Posterior vena cava (tissue), 2 donors: ENCODE measurements at regions of chr3 and their contacts with region 1.

Region 1: GRCh38 chr3:41912280-41912679 is 49.6 kb downstream of the ULK4 start:
- DNase-seq: no peak

Region 2: GRCh38 chr3:41622769-41623168 is 289.5 kb before region 1 on chr3:
- intact Hi-C with region 1: loop called in 1 of 2 experiments (anchors 5 kb)
- DNase-seq: no peak

Region 3: DNA sequence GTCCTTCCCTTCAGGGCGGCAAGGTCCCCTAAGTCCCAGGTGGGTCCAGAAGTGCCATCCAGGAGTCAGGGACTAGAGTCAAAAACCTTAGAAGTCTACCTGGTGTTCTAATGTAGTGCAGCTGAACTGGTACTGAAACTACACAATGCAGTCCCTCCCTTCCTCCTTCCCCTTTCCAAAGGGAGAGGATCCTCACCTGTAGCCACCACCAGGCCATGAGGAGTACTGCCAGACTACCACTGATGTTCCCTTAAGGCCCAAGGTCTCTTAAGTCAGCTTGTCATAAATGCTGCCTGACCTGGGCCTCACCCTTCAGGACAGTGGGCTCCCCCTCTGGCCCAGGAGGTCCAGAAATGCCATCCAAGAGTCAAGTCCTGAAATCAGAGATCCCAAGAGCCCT is 49.3 kb before region 1 on chr3:
- intact Hi-C with region 1: no loop called
- DNase-seq: no peak

Region 4: DNA sequence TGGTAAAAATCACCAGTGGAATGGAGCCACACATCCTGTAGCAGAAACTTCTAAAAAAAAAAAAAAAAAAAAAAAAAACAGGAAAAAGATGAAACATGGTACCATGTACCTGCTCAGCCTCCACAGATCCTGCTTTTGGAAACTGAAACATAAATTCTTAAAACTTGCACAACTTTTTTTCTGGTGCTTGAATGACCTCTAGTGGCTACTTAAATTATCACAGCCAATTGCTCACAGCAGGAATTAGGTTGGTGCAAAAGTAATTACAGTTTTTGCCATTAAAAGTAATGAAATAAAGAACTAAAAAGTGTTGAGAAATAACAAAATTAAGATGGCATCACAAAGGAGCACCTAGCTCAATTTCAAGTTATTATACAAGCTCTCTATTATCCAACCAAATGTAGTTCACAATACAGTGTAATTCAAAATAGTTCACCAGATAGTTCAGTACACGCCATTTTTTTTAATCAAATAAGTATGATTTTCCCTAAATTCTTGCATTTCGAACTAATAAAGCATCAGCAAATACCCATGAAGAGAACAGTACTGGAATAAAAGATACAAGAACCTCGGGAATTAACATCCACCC is 31.0 kb before region 1 on chr3:
- intact Hi-C with region 1: no loop called
- DNase-seq: no peak